ENCODE measurements at regions of chr14 and their contacts with region 1.

Region 1: DNA sequence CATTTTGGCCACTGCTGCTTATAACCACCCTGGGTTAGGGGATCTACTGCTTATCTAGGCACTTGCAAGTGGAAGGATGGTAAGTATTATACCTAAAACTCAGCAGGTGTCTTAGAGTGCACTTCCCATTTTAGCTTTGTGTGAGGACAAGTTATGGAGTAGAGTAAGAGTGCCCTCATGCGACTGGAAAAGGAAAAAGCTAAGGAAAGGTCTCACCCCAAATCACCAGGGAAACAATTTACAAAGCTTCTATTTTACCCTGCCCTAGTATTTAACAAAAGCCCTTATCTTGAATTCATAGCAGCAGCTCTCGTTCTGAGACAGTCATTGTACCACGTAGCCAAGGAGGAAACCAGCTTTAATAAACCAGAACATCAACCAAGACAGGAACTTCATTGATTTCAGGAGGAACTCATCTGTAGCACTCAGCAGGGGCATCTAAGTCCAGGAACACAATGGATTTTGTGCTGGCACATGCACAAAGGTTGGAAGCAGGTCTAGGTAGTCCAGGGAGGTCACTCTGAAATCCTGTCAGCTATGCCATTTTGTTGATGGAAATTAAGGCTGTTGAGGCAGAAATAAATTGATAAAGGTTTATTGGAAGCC is 2.9 kb downstream of the RDH12 start:
- DNase-seq: no peak
- H3K4me3 ChIP-seq: no peak overlapping the region
- CTCF ChIP-seq: peak; percentile 64

Region 2: GRCh38 chr14:66359500-66359899 is 1345.1 kb before region 1 on chr14:
- CTCF ChIA-PET with region 1: interaction called, 16 read pairs
- POLR2A ChIA-PET with region 1: no interaction called
- DNase-seq: no peak
- H3K4me3 ChIP-seq: no peak overlapping the region
- CTCF ChIP-seq: peak; percentile 30

Region 3: GRCh38 chr14:67526676-67527459 is 177.7 kb before region 1 on chr14:
- CTCF ChIA-PET with region 1: interaction called, 61 read pairs
- POLR2A ChIA-PET with region 1: no interaction called
- DNase-seq: no peak
- H3K4me3 ChIP-seq: no peak overlapping the region
- CTCF ChIP-seq: peak; percentile 45

Region 4: GRCh38 chr14:67599698-67600561 is 104.7 kb before region 1 on chr14 and contains the start of gene PIGH:
- CTCF ChIA-PET with region 1: interaction called, 42 read pairs
- POLR2A ChIA-PET with region 1: interaction called, 5 read pairs
- DNase-seq: no peak
- H3K4me3 ChIP-seq: peak within 1 kb of the TSS; percentile 86
- CTCF ChIP-seq: peak; percentile 69

Region 5: GRCh38 chr14:67674481-67675169 is 30.0 kb before region 1 on chr14 and contains the start of gene VTI1B:
- CTCF ChIA-PET with region 1: interaction called, 98 read pairs
- POLR2A ChIA-PET with region 1: interaction called, 5 read pairs
- DNase-seq: no peak
- H3K4me3 ChIP-seq: peak within 1 kb of the TSS; percentile 78
- CTCF ChIP-seq: no peak

Region 6: DNA sequence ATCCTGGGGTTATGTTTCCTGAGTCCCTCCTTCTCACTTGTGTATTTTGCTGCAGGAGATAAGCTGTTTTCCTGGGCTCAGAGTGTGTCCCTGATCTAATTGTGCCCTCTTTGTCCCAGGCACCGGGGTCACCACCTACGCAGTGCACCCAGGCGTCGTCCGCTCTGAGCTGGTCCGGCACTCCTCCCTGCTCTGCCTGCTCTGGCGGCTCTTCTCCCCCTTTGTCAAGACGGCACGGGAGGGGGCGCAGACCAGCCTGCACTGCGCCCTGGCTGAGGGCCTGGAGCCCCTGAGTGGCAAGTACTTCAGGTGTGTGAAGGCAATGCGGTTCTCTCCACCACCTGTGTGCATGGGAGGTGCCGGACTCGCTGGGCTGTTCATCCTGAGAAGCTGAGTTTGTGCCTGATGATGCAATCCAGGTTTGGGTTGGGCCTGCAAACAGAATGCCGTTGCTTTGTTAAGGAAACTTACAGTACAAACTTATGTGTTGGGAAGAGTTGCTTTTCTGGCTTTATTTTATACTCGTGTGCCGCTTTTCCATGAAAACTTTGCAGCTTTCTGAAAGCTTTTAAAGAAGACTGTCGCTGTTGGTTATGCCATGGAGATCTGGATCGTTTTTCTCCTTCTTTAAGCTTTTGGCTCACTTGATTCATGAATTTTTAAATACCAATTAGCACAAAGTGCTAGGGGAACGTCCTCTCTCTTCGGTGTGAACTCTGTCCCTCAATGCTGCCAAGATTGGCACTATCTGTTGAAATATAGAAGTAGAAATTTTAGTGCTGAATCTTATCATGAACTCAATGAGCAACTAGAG is 24.7 kb after region 1 on chr14:
- CTCF ChIA-PET with region 1: interaction called, 10 read pairs
- POLR2A ChIA-PET with region 1: no interaction called
- DNase-seq: no peak
- H3K4me3 ChIP-seq: no peak overlapping the region
- CTCF ChIP-seq: no peak

Region 7: DNA sequence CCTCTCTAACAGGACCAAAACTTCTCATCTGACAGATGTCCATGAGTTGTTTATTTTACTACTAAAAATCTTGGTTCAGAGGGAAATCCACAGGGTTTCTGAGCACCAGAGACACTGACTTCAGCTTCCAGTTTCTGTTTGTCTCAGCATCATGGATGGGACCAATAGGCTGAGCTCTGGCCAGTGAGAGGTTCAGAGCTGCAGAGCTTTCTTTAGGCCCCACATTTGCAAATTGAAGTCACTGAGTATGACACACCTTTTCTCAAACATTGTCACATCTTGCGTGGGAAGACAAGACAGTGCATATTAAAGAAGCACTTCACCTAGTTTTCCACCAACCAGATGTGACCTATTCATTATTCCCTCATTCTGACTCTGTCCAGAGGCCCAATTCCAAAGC is 42.3 kb after region 1 on chr14:
- CTCF ChIA-PET with region 1: no interaction called
- POLR2A ChIA-PET with region 1: no interaction called
- DNase-seq: no peak
- H3K4me3 ChIP-seq: no peak overlapping the region
- CTCF ChIP-seq: no peak

Region 8: DNA sequence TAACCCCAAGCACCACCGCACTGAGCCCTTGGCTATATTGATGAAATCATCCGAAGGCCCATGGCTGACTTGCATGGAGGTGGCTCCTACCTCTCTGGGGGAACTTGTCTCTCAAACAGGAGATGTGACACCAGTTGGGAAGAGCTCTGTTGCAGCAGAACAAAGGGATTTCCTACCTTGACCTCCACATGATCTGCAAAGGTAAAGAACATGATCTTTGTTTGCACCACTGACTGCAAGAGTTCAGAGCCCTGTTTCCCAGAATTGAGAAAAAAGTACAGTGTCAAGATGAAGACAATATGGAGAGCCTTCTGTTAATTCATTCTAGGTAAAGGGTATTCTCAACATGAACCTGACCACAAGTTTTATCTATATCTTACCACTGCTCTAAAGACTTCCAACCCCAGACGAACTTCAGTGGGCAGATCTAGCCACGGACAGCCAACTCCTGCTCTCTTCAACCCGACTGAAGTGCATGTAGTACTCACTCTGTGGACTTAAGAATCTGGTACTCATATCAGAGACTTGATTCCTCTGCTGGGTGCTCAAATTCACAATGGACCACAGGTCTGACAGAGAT is 79.7 kb after region 1 on chr14:
- CTCF ChIA-PET with region 1: no interaction called
- POLR2A ChIA-PET with region 1: no interaction called
- DNase-seq: no peak
- H3K4me3 ChIP-seq: no peak overlapping the region
- CTCF ChIP-seq: no peak

Region 9: DNA sequence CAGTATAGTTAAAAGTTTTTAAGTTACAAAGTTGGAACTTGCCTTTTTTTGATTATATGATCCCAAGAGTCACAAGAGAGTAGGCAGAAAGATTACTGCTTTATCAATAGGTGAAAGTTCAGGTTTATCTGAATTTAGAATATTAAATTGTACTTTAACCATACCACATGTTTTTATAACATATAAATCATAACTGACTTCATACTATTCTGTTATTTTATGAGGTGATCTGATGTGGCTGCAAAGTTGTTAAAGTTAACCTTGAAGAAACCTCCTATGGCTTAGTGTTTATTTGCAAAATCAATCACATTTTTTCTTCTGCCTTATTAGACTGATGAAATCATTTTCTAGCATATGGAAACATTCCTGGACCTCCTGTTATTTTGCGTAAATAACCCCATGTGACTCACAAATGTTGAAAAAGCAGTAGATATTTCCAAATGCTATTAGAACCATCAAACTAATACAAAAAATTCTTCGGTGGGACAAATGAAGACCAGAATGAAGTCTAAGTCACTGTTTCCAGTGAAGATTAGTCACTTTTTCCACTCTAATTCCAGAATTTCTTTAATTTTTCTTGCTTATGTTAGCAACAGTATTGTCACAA is 247.0 kb after region 1 on chr14:
- CTCF ChIA-PET with region 1: no interaction called
- POLR2A ChIA-PET with region 1: no interaction called
- DNase-seq: no peak
- H3K4me3 ChIP-seq: no peak overlapping the region
- CTCF ChIP-seq: no peak